ENCODE measurements at regions of chr20 and their contacts with region 1.

Region 1: DNA sequence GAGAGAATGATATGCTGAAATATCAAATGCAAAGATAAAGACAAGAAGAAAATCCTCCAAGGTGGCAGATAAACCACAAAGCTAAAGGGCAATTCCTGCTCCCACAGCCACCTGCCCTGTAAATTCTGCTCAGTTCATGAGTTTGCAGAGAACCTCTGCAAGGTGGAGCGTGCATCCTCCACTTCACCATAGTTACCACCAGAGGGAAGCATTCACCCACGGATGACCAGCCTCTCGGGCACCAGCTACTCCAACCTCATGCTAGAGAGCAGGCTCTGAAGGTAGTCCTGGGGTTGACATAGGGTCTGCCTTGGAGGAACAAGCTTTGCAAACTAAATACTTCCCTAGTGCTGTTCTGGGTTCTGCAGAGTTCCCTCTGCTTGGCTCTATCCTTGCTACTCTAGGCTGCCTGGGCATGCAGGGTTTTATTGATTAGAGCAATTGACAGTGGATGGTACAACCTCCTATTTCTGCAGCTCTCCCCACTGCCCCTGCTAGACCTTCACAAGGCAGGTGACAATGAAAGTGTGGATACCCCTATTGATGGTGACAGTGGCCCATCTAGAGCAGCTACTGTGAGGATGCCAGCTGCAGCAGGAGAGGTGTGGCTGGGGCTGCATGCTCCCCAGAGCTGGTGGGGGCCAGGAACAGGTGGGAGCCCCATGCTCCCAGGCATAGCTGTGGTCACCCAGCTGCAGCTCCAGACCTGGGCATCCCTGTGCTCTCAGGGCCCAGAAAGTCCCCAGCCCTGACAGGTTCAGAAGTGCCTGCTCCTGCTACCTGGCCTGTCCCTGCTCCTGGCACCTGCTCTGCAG is 51.1 kb downstream of the GGTLC1 start:
- DNase-seq: peak; percentile 43 to 82 (median 66)
- ATAC-seq: peak; percentile 96
- H3K4me3 ChIP-seq: no peak overlapping the region
- H3K4me3 Mint-ChIP-seq: no peak overlapping the region
- H3K27ac ChIP-seq: no peak overlapping the region
- H3K27ac Mint-ChIP-seq: no peak overlapping the region
- H3K4me1 ChIP-seq: no peaks in the 10 kb centered on the region
- H3K4me1 Mint-ChIP-seq: no peaks in the 10 kb centered on the region
- H3K27me3 ChIP-seq: no peaks in the 10 kb centered on the region
- H3K27me3 Mint-ChIP-seq: no peaks in the 10 kb centered on the region
- CTCF ChIP-seq: peak; percentile 71

Region 2: DNA sequence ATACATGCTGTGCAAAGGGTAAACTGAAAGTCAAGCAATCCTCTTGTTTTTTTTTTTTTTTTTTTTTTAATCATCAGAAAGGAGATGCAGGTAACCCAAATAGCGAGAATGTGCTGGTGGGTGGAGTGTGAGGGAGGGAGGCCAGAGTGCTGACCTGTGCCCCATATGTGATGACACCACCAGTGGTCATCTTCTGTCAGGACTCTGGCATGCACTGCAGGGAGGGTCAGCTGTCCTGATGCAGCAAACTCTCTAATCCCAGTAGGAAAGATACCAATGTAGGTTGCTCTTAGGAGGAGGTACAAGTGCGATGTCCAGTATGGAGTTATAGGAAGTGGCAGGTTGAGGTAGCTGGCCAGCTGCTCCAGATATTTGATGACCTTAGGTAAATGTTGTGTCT is 245.9 kb before region 1 on chr20:
- CTCF ChIA-PET with region 1: no interaction called
- POLR2A ChIA-PET with region 1: no interaction called
- intact Hi-C with region 1: no loop called
- DNase-seq: peak in 1 of 9 experiments; percentile 21
- ATAC-seq: no peak
- H3K4me3 ChIP-seq: no peak overlapping the region
- H3K4me3 Mint-ChIP-seq: no peak overlapping the region
- H3K27ac ChIP-seq: no peak overlapping the region
- H3K27ac Mint-ChIP-seq: no peak overlapping the region
- H3K4me1 ChIP-seq: no peaks in the 10 kb centered on the region
- H3K4me1 Mint-ChIP-seq: no peaks in the 10 kb centered on the region
- H3K27me3 ChIP-seq: no peaks in the 10 kb centered on the region
- H3K27me3 Mint-ChIP-seq: peaks cover 11% of the 10 kb centered on the region
- CTCF ChIP-seq: no peak

Region 3: DNA sequence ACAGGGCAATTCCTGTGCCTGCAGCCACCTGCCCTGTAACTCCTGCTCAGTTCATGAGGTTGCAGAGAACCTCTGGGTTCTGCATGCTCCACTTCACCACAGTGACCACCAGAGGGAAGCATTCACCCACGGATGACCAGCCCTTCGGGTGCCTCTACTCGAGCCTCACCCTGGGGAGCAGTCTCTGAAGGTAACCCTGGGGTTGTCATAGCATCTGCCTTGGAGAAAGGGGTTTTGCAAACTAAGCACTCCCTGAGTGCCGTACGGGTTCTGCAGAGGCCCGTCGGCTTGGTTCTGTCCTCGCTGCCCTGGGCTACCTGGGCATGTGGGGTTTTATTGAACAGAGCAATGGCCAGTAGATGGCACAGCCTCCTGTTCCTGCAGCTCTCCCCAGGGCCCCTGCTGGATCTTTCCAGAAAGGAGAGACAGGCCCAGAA is 47.7 kb before region 1 on chr20:
- CTCF ChIA-PET with region 1: interaction called, 31 read pairs
- POLR2A ChIA-PET with region 1: no interaction called
- intact Hi-C with region 1: loop called in 1 of 2 experiments (anchors 2 kb)
- DNase-seq: peak; percentile 37 to 82 (median 63)
- ATAC-seq: peak; percentile 88
- H3K4me3 ChIP-seq: no peak overlapping the region
- H3K4me3 Mint-ChIP-seq: no peak overlapping the region
- H3K27ac ChIP-seq: no peak overlapping the region
- H3K27ac Mint-ChIP-seq: no peak overlapping the region
- H3K4me1 ChIP-seq: peaks cover 9% of the 10 kb centered on the region
- H3K4me1 Mint-ChIP-seq: no peaks in the 10 kb centered on the region
- H3K27me3 ChIP-seq: no peaks in the 10 kb centered on the region
- H3K27me3 Mint-ChIP-seq: peaks cover 4% of the 10 kb centered on the region
- CTCF ChIP-seq: peak; percentile 61

Region 4: GRCh38 chr20:23995905-23996666 is 58.6 kb after region 1 on chr20:
- CTCF ChIA-PET with region 1: interaction called, 10 read pairs
- POLR2A ChIA-PET with region 1: no interaction called
- intact Hi-C with region 1: loop called in 1 of 2 experiments (anchors 5 kb)
- DNase-seq: peak; percentile 13 to 81 (median 68)
- ATAC-seq: peak; percentile 38
- H3K4me3 ChIP-seq: no peak overlapping the region
- H3K4me3 Mint-ChIP-seq: no peak overlapping the region
- H3K27ac ChIP-seq: no peak overlapping the region
- H3K27ac Mint-ChIP-seq: no peak overlapping the region
- H3K4me1 ChIP-seq: no peaks in the 10 kb centered on the region
- H3K4me1 Mint-ChIP-seq: peaks cover 2% of the 10 kb centered on the region
- H3K27me3 ChIP-seq: no peaks in the 10 kb centered on the region
- H3K27me3 Mint-ChIP-seq: peaks cover 2% of the 10 kb centered on the region
- CTCF ChIP-seq: peak; percentile 95

Region 5: GRCh38 chr20:24106150-24106800 is 168.8 kb after region 1 on chr20:
- CTCF ChIA-PET with region 1: interaction called, 37 read pairs
- POLR2A ChIA-PET with region 1: no interaction called
- intact Hi-C with region 1: no loop called
- DNase-seq: no peak
- ATAC-seq: no peak
- H3K4me3 ChIP-seq: no peak overlapping the region
- H3K4me3 Mint-ChIP-seq: no peak overlapping the region
- H3K27ac ChIP-seq: no peak overlapping the region
- H3K27ac Mint-ChIP-seq: no peak overlapping the region
- H3K4me1 ChIP-seq: no peaks in the 10 kb centered on the region
- H3K4me1 Mint-ChIP-seq: peaks cover 2% of the 10 kb centered on the region
- H3K27me3 ChIP-seq: no peaks in the 10 kb centered on the region
- H3K27me3 Mint-ChIP-seq: peaks cover 2% of the 10 kb centered on the region
- CTCF ChIP-seq: no peak

Region 6: GRCh38 chr20:24917797-24918578 is 980.5 kb after region 1 on chr20:
- CTCF ChIA-PET with region 1: interaction called, 10 read pairs
- POLR2A ChIA-PET with region 1: no interaction called
- intact Hi-C with region 1: loop called in 1 of 2 experiments (anchors 1 kb)
- DNase-seq: peak; percentile 16 to 76 (median 49)
- ATAC-seq: peak; percentile 44
- H3K4me3 ChIP-seq: no peak overlapping the region
- H3K4me3 Mint-ChIP-seq: peak overlapping the region; percentile 5
- H3K27ac ChIP-seq: no peak overlapping the region
- H3K27ac Mint-ChIP-seq: no peak overlapping the region
- H3K4me1 ChIP-seq: no peaks in the 10 kb centered on the region
- H3K4me1 Mint-ChIP-seq: peaks cover 4% of the 10 kb centered on the region
- H3K27me3 ChIP-seq: no peaks in the 10 kb centered on the region
- H3K27me3 Mint-ChIP-seq: peaks cover 9% of the 10 kb centered on the region
- CTCF ChIP-seq: peak; percentile 75

Region 7: DNA sequence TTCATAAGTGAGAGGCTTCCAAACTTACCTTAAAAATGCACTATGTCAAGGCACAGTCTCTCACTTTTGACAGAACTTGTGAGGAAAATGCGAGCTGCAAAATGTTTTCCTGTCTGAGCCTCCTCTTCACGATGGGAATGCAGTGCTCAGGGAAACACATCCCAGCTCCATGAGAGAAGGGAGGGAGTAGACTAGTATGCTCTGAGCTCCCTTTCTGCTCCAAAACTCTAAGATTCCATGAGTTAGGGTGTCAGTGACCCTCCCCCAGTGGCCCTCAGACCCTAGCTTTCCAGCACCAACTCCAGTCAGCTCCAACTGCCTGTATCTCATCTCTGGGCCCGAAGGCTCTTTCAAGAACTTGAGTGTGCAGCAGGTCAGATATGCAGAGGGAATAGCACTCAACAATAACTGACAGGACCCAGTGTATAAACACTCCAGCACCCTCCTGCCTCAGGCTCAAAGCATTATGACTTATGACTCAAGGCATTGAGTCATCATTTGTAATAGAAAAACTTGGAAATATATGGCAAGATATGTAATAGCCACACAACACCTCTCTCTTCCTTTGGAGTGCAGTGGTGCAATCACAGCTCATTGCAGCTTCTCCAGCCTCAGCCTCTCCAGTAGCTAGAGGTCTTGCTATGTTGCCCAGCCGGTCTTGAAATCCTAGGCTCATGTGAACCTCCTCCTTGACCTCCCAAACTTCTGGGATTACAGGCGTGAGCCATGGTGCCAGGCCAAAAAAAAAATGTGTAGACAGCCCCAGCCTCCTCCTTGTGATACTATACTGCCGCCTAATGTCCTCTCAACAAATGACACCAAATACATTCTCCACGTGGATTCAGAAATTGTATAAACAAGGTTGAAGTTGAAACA is 1241.3 kb after region 1 on chr20:
- CTCF ChIA-PET with region 1: no interaction called
- POLR2A ChIA-PET with region 1: no interaction called
- intact Hi-C with region 1: loop called (anchors 2 to 5 kb)
- DNase-seq: peak in 3 of 9 experiments; percentile 8 to 67 (median 56)
- ATAC-seq: peak; percentile 71
- H3K4me3 ChIP-seq: no peak overlapping the region
- H3K4me3 Mint-ChIP-seq: no peak overlapping the region
- H3K27ac ChIP-seq: no peak overlapping the region
- H3K27ac Mint-ChIP-seq: no peak overlapping the region
- H3K4me1 ChIP-seq: no peaks in the 10 kb centered on the region
- H3K4me1 Mint-ChIP-seq: no peaks in the 10 kb centered on the region
- H3K27me3 ChIP-seq: no peaks in the 10 kb centered on the region
- H3K27me3 Mint-ChIP-seq: peaks cover 4% of the 10 kb centered on the region
- CTCF ChIP-seq: peak; percentile 77